Naive thymus-derived CD4-positive, alpha-beta T cell (primary cell): ENCODE measurements at regions of chr16 and their contacts with region 1.

Region 1: GRCh38 chr16:81006814-81007696 is at the starts of genes CENPN and CMC2:
- DNase-seq: peak; percentile 98 to 100 (median 99)
- ATAC-seq: peak; percentile 89
- H3K4me3 ChIP-seq: peak within 1 kb of the TSS; percentile 83
- H3K4me3 Mint-ChIP-seq: peak within 1 kb of the TSS; percentile 83 to 100 (median 96)
- H3K27ac ChIP-seq: peak within 1 kb of the TSS; percentile 95
- H3K27ac Mint-ChIP-seq: peak within 1 kb of the TSS; percentile 97 to 100 (median 100)
- H3K4me1 ChIP-seq: peaks cover 20 to 21% of the 10 kb centered on the region in 2 donors
- H3K4me1 Mint-ChIP-seq: peaks cover 21 to 70% (median 40%) of the 10 kb centered on the region in 7 donors
- H3K27me3 ChIP-seq: no peaks in the 10 kb centered on the region
- H3K27me3 Mint-ChIP-seq: no peaks in the 10 kb centered on the region
- total RNA-seq, gene CENPN: 1.4 to 41.8 (median 6.9) TPM
- total RNA-seq, gene CMC2: 28.3 to 78.4 (median 40.8) TPM

Region 2: DNA sequence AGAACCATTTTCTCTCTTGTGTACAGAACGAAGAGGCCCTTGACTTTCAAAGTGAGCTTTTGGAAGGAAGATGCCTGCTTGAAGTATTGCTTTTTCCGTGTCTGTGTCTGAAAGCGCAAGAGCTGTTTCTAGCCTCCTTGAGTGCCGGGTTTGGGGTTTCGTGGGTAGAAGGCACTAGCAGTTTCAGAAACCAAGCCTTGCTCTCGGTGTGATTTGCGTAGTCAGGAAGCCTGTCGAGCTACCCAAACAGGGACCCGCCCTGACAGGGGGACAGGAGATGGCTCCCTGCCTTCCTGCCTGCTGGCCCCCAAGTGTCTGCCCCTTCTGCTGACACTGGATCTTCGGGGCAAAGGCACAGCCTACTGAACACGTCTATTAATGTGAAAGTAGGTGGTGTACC is 1728.5 kb before region 1 on chr16:
- CTCF ChIA-PET with region 1: no interaction called
- POLR2A ChIA-PET with region 1: no interaction called
- intact Hi-C with region 1: loop called in 1 of 2 experiments (anchors 10 kb)
- DNase-seq: peak in 8 of 9 donors; percentile 14 to 64 (median 44)
- ATAC-seq: peak; percentile 85
- H3K4me3 ChIP-seq: peak overlapping the region; percentile 22
- H3K4me3 Mint-ChIP-seq: peak overlapping the region; percentile 5 to 74 (median 55)
- H3K27ac ChIP-seq: no peak overlapping the region
- H3K27ac Mint-ChIP-seq: peak overlapping the region in 8 of 9 donors; percentile 10 to 91 (median 63)
- H3K4me1 ChIP-seq: peaks cover 16 to 53% of the 10 kb centered on the region in 2 donors
- H3K4me1 Mint-ChIP-seq: peaks cover 16 to 83% (median 34%) of the 10 kb centered on the region in 7 donors
- H3K27me3 ChIP-seq: no peaks in the 10 kb centered on the region
- H3K27me3 Mint-ChIP-seq: peaks cover 0 to 26% (median 4%) of the 10 kb centered on the region in 5 donors

Region 3: GRCh38 chr16:80580109-80580832 is 426.8 kb before region 1 on chr16:
- CTCF ChIA-PET with region 1: no interaction called
- POLR2A ChIA-PET with region 1: no interaction called
- intact Hi-C with region 1: loop called (anchors 5 kb)
- DNase-seq: peak; percentile 11 to 68 (median 59)
- ATAC-seq: peak; percentile 91
- H3K4me3 ChIP-seq: peak overlapping the region; percentile 29
- H3K4me3 Mint-ChIP-seq: peak overlapping the region; percentile 4 to 83 (median 54)
- H3K27ac ChIP-seq: peak overlapping the region; percentile 57
- H3K27ac Mint-ChIP-seq: peak overlapping the region; percentile 78 to 99 (median 93)
- H3K4me1 ChIP-seq: peaks cover 31 to 36% of the 10 kb centered on the region in 2 donors
- H3K4me1 Mint-ChIP-seq: peaks cover 18 to 64% (median 40%) of the 10 kb centered on the region in 7 donors
- H3K27me3 ChIP-seq: no peaks in the 10 kb centered on the region
- H3K27me3 Mint-ChIP-seq: peaks cover 0 to 1% (median 0%) of the 10 kb centered on the region in 5 donors

Region 4: DNA sequence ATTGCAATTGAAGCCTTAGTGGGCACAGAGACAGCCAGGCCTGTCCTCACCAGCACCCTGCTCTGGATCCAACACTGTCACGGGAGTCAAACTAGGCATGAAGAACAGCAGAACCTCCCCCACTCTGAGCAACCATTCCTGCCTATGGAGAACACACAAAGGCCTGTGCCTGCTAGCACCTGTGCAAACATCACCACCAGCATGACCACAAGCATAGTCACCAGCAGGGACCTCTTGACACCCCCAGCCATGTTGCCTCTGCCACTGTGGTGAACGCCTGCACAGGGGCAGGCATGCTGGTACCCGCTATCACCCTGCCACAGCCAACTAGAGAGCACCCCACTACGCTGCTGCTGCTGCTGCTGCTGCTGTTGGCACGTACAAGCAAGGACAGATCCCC is 52.1 kb before region 1 on chr16:
- CTCF ChIA-PET with region 1: no interaction called
- POLR2A ChIA-PET with region 1: no interaction called
- intact Hi-C with region 1: no loop called
- DNase-seq: no peak
- ATAC-seq: no peak
- H3K4me3 ChIP-seq: no peak overlapping the region
- H3K4me3 Mint-ChIP-seq: no peak overlapping the region
- H3K27ac ChIP-seq: no peak overlapping the region
- H3K27ac Mint-ChIP-seq: no peak overlapping the region
- H3K4me1 ChIP-seq: no peaks in the 10 kb centered on the region
- H3K4me1 Mint-ChIP-seq: no peaks in the 10 kb centered on the region
- H3K27me3 ChIP-seq: no peaks in the 10 kb centered on the region
- H3K27me3 Mint-ChIP-seq: peaks cover 0 to 8% (median 3%) of the 10 kb centered on the region in 5 donors

Region 5: DNA sequence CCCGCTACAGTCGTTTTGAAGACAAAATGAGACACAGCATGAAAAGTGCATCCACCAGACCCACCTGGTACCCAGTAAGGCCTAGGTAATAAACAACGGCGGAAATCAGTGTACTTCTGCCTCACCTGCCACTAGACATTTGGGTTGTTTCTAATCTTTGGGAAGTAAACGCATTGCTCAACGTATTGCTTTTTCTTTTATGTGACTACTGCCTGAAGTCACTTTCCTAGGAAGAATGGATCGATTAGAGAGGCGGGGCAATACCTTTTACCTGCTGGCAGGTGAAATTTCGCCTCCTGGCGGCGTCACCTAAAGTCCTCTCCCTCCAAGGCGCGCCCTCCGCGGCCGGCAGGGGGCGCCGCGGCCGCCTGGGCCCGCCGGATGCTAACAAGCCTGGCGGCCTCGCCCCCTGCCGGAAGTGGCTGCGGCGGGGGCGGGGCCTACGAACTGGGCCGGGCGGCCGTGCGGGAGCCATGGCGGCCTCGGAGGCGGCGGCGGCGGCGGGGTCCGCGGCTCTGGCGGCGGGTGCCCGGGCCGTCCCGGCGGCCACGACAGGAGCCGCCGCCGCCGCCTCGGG is 28.4 kb after region 1 on chr16 and contains the start of gene ATMIN:
- CTCF ChIA-PET with region 1: interaction called, 51 read pairs
- POLR2A ChIA-PET with region 1: interaction called, 61 read pairs
- intact Hi-C with region 1: loop called (anchors 1 kb)
- DNase-seq: peak; percentile 80 to 96 (median 90)
- ATAC-seq: peak; percentile 100
- H3K4me3 ChIP-seq: peak within 1 kb of the TSS; percentile 52
- H3K4me3 Mint-ChIP-seq: peak within 1 kb of the TSS; percentile 79 to 92 (median 89)
- H3K27ac ChIP-seq: peak within 1 kb of the TSS; percentile 69
- H3K27ac Mint-ChIP-seq: peak within 1 kb of the TSS; percentile 29 to 87 (median 77)
- H3K4me1 ChIP-seq: peaks cover 20 to 24% of the 10 kb centered on the region in 2 donors
- H3K4me1 Mint-ChIP-seq: peaks cover 16 to 44% (median 39%) of the 10 kb centered on the region in 7 donors
- H3K27me3 ChIP-seq: no peaks in the 10 kb centered on the region
- H3K27me3 Mint-ChIP-seq: no peaks in the 10 kb centered on the region
- total RNA-seq, gene ATMIN: 29.1 to 46.9 (median 35.3) TPM

Region 6: DNA sequence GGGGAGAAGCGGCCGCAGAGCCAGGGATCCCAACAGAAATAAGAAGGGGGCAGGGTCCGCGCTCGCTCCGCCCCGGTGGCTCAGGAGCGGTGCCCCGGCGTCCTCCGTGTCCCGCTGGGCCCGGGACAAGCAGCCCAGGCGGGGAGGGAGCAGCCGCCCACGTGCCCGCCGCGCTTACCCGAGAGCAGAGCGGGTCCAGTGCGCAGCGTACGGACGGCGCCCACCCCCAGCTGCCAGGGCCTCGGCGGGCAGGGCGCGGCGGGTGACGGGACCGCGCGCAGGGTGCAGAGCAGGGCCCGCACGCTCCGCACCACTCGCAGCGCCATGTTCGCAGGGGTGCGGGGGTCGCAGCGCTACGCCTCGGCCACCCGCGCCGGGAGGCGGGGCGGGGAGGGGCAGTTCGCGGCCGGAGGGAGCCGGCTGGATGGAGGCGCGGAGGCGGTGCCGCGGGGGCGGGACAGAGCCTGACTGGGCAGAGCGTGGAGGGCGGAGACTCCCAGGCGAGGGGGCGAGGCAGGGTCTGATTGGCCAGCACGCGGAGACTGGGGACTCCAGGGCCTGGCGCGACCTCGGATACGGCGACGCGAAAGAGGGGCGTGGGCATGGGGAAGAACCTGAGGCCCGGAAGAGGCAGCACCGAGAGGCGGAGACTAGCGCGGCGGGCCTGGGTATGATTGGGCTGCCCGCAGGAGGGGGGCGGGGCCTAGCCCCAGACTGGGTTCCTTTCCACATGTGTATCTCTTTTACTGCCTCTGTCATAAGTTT is 89.1 kb after region 1 on chr16 and contains the start of gene GCSH:
- CTCF ChIA-PET with region 1: no interaction called
- POLR2A ChIA-PET with region 1: no interaction called
- intact Hi-C with region 1: loop called (anchors 1 kb)
- DNase-seq: peak; percentile 94 to 99 (median 98)
- ATAC-seq: peak; percentile 98
- H3K4me3 ChIP-seq: peak within 1 kb of the TSS; percentile 71
- H3K4me3 Mint-ChIP-seq: peak within 1 kb of the TSS; percentile 72 to 93 (median 82)
- H3K27ac ChIP-seq: peak within 1 kb of the TSS; percentile 67
- H3K27ac Mint-ChIP-seq: peak within 1 kb of the TSS; percentile 45 to 87 (median 71)
- H3K4me1 ChIP-seq: peaks cover 0 to 6% of the 10 kb centered on the region in 2 donors
- H3K4me1 Mint-ChIP-seq: peaks cover 3 to 19% (median 9%) of the 10 kb centered on the region in 7 donors
- H3K27me3 ChIP-seq: no peaks in the 10 kb centered on the region
- H3K27me3 Mint-ChIP-seq: no peaks in the 10 kb centered on the region
- total RNA-seq, gene GCSH: 1.5 to 7.5 (median 4.9) TPM

Region 7: GRCh38 chr16:81632392-81633146 is 625.5 kb after region 1 on chr16:
- CTCF ChIA-PET with region 1: no interaction called
- POLR2A ChIA-PET with region 1: no interaction called
- intact Hi-C with region 1: loop called in 1 of 2 experiments (anchors 10 kb)
- DNase-seq: peak; percentile 20 to 81 (median 73)
- ATAC-seq: peak; percentile 91
- H3K4me3 ChIP-seq: no peak overlapping the region
- H3K4me3 Mint-ChIP-seq: peak overlapping the region in 8 of 10 donors; percentile 0 to 71 (median 52)
- H3K27ac ChIP-seq: peak overlapping the region; percentile 56
- H3K27ac Mint-ChIP-seq: peak overlapping the region; percentile 53 to 99 (median 90)
- H3K4me1 ChIP-seq: peaks cover 18 to 20% of the 10 kb centered on the region in 2 donors
- H3K4me1 Mint-ChIP-seq: peaks cover 18 to 72% (median 52%) of the 10 kb centered on the region in 7 donors
- H3K27me3 ChIP-seq: no peaks in the 10 kb centered on the region
- H3K27me3 Mint-ChIP-seq: no peaks in the 10 kb centered on the region

Region 8: GRCh38 chr16:81745704-81746558 is 738.9 kb after region 1 on chr16:
- CTCF ChIA-PET with region 1: interaction called, 3 read pairs
- POLR2A ChIA-PET with region 1: no interaction called
- intact Hi-C with region 1: loop called in 1 of 2 experiments (anchors 1 kb)
- DNase-seq: peak; percentile 53 to 75 (median 71)
- ATAC-seq: peak; percentile 97
- H3K4me3 ChIP-seq: peak overlapping the region; percentile 66
- H3K4me3 Mint-ChIP-seq: peak overlapping the region; percentile 82 to 90 (median 86)
- H3K27ac ChIP-seq: peak overlapping the region; percentile 65
- H3K27ac Mint-ChIP-seq: peak overlapping the region; percentile 83 to 95 (median 88)
- H3K4me1 ChIP-seq: peaks cover 4 to 10% of the 10 kb centered on the region in 2 donors
- H3K4me1 Mint-ChIP-seq: peaks cover 6 to 33% (median 10%) of the 10 kb centered on the region in 7 donors
- H3K27me3 ChIP-seq: no peaks in the 10 kb centered on the region
- H3K27me3 Mint-ChIP-seq: peaks cover 0 to 6% (median 0%) of the 10 kb centered on the region in 5 donors